ENCODE measurements at regions of chr6 and their contacts with region 1.

Region 1: DNA sequence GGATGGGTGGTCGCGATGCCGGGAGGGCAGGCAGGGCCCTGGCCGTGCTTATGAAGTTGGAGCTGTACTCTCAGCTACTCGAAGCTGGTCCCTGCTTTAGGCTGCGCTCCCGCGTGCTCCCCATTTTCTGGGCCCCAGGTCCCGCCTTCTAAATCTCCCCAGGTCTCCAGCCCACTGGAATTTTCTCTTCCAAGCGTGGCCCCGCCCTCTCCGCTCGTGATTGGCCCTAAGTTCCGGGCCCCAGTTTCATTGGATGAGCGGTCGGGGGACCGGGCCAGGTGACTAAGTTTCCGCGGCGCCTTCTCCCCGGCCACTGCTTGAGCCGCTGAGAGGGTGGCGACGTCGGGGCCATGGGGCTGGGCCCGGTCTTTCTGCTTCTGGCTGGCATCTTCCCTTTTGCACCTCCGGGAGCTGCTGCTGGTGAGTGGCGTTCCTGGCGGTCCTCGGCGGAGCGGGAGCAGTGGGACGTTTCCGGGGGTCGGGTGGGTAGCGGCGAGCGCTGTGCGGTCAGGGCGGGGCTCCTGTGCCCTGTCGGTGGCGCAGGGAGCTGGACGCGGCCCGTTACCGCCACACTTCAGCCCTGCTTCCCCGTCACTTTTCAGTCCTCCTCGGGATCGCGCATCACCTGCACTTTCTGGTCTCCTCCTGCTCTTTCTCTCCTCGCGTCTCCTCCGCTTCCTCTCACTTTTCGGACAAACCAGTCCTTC is at the start of gene MICA:
- DNase-seq: peak; percentile 94
- H3K4me3 ChIP-seq: peak within 1 kb of the TSS; percentile 19 to 92 (median 72)
- H3K27ac ChIP-seq: peak within 1 kb of the TSS; percentile 98 to 100 (median 99)
- H3K4me1 ChIP-seq: peaks cover 29 to 65% (median 50%) of the 10 kb centered on the region in 4 donors
- H3K27me3 ChIP-seq: no peaks in the 10 kb centered on the region
- CTCF ChIP-seq: peak in 2 of 5 experiments; percentile 22 to 42
- EP300 ChIP-seq: no peak
- POLR2A ChIP-seq: peak; percentile 77
- total RNA-seq, gene MICA: 7.8 to 45.3 (median 19.9) TPM

Region 2: DNA sequence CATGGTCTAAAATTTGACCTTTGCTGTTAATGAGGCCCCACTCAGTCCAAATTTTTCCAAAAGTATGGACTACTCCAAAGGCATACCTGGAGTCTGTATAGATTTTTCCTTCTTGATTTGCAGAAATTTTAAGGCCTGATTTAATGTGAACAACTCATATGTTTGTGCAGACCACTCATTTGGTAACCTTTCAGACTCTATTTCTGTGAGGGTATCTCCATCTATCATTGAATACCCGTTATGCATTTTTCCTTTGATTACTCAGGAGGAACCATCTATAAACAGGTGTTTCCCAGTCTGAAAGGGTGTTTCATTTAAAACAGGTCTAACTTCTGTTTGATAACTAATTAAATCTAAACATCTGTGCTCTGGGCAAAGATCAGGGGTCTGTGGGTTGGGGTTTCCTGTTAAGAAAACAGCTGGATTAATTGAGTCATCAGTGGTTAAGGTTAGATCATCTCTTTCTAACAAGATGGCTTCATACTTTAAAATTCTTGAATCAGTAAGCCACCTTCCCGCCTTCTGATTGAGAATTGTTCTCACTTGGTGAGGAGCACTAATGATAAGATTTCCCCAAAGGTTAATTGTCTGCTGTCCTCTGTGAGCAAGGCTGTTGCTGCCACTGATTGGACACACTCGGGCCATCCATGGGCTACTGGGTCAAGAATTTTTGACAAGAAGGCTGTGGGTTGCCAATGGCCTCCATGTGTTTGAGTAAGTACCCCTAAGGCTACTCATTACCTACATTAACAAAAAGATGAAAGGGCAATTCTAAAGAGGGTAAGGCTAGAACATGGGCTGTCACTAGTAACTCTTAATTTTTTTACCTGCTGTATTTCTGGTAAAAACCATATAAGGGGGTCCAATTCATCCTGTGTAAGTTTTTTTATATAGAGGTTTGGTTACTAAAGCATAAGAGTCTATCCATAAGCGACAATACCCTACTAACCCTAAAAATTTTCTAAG is 70.5 kb before region 1 on chr6:
- in situ Hi-C with region 1: no loop called
- intact Hi-C with region 1: no loop called
- DNase-seq: no peak
- H3K4me3 ChIP-seq: no peak overlapping the region
- H3K27ac ChIP-seq: no peak overlapping the region
- H3K4me1 ChIP-seq: no peaks in the 10 kb centered on the region
- H3K27me3 ChIP-seq: no peaks in the 10 kb centered on the region
- CTCF ChIP-seq: no peak
- EP300 ChIP-seq: no peak
- POLR2A ChIP-seq: no peak

Region 3: DNA sequence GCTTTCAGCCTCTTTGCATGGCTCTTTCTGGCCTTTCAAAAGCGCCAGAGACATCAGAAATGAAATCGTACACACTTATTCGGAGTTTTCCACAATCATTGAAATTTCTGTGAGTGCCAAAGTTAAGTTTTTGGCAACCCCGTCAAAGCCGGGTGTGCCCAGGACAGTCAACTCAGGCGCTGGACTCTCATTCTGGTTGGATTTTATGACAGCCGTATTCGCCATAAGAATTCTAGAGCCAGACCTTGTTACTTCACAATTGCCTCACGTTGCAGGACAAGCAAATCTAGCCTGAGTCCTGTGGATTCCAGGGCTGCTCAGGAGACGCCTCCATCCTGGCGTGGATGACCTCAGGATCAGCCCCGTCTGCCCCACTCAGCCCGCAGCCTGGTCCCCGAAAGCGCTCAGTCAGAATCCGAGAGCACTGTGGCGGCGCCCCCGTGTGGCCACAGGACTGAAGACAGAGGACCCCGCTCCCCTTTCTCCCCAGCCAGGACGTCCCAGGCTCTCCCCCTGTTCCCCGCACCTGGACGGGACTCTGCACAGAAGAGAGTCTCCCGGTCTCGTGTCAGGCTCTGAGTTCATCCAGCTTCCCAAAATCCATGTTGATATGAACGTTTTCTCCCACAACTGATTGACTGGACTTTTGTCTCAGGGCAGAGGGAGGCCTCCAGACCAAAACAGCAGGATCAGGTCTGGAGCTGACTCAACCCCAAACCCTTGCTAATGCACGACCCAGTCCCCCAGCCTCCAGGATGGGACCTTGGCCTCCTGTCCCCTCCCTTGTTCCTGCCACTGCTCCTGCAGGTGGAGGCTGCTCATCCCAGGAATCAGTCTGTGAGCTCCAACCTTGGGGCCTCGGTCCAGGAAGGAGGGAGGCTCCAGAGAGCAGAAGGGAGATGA is 38.2 kb after region 1 on chr6:
- in situ Hi-C with region 1: loop called in 3 of 4 experiments (anchors 5 kb)
- intact Hi-C with region 1: no loop called
- DNase-seq: peak; percentile 87
- H3K4me3 ChIP-seq: peak overlapping the region in 1 of 4 donors; percentile 15
- H3K27ac ChIP-seq: no peak overlapping the region
- H3K4me1 ChIP-seq: peaks cover 0 to 5% (median 2%) of the 10 kb centered on the region in 4 donors
- H3K27me3 ChIP-seq: peaks cover 38% of the 10 kb centered on the region
- CTCF ChIP-seq: peak; percentile 82 to 87 (median 86)
- EP300 ChIP-seq: no peak
- POLR2A ChIP-seq: no peak

Region 4: GRCh38 chr6:32050562-32050961 is 647.1 kb after region 1 on chr6:
- in situ Hi-C with region 1: no loop called
- intact Hi-C with region 1: no loop called
- DNase-seq: no peak
- H3K4me3 ChIP-seq: no peak overlapping the region
- H3K27ac ChIP-seq: no peak overlapping the region
- H3K4me1 ChIP-seq: peaks cover 3 to 16% (median 9%) of the 10 kb centered on the region in 4 donors
- H3K27me3 ChIP-seq: no peaks in the 10 kb centered on the region
- CTCF ChIP-seq: no peak
- EP300 ChIP-seq: no peak
- POLR2A ChIP-seq: no peak